ENCODE measurements at regions of chr3 and their contacts with region 1.

Region 1: GRCh38 chr3:149783576-149783975 is 8.8 kb downstream of the ANKUB1 start:
- DNase-seq: no peak
- ATAC-seq: peak; percentile 26
- H3K4me3 Mint-ChIP-seq: no peak overlapping the region
- H3K27ac Mint-ChIP-seq: peak overlapping the region; percentile 84
- H3K4me1 Mint-ChIP-seq: peaks cover 46% of the 10 kb centered on the region
- H3K27me3 Mint-ChIP-seq: no peaks in the 10 kb centered on the region
- CTCF ChIP-seq: no peak

Region 2: GRCh38 chr3:149752051-149752787 is 31.4 kb before region 1 on chr3 and contains the start of gene COMMD2:
- CTCF ChIA-PET with region 1: no interaction called
- POLR2A ChIA-PET with region 1: no interaction called
- intact Hi-C with region 1: loop called (anchors 2 kb)
- DNase-seq: peak; percentile 68
- ATAC-seq: peak; percentile 99
- H3K4me3 Mint-ChIP-seq: peak within 1 kb of the TSS; percentile 98
- H3K27ac Mint-ChIP-seq: peak within 1 kb of the TSS; percentile 92
- H3K4me1 Mint-ChIP-seq: peaks cover 30% of the 10 kb centered on the region
- H3K27me3 Mint-ChIP-seq: peaks cover 7% of the 10 kb centered on the region
- CTCF ChIP-seq: no peak
- total RNA-seq, gene COMMD2: 41.5 and 45.6 TPM in 2 replicates

Measured in activated B cell treated with CpG ODN at 0.5 μM for 24 hours (primary cell).